ENCODE measurements at regions of chr3 and their contacts with region 1.

Region 1: GRCh38 chr3:13484851-13485590 is 4.9 kb downstream of the HDAC11 start:
- DNase-seq: peak; percentile 92 to 98 (median 94)
- ATAC-seq: peak; percentile 90
- H3K4me3 ChIP-seq: no peak overlapping the region
- H3K27ac ChIP-seq: peak overlapping the region; percentile 60
- H3K4me1 ChIP-seq: peaks cover 21 to 49% of the 10 kb centered on the region in 2 experiments
- H3K27me3 ChIP-seq: no peaks in the 10 kb centered on the region
- CTCF ChIP-seq: no peak
- EP300 ChIP-seq: peak; percentile 94
- POLR2A ChIP-seq: 0 out of 2 replicates have a peak, but pooled peaks have one; percentile 30
- RAD21 ChIP-seq: no peak

Region 2: GRCh38 chr3:13429631-13430291 is 55.3 kb before region 1 on chr3:
- CTCF ChIA-PET with region 1: no interaction called
- POLR2A ChIA-PET with region 1: no interaction called
- in situ Hi-C with region 1: no loop called
- intact Hi-C with region 1: loop called (anchors 2 kb)
- DNase-seq: peak in 2 of 4 experiments; percentile 15 to 67
- ATAC-seq: peak; percentile 60
- H3K4me3 ChIP-seq: no peak overlapping the region
- H3K27ac ChIP-seq: peak overlapping the region; percentile 45; the same call in 2 of the 3 replicates
- H3K4me1 ChIP-seq: peaks cover 10 to 15% of the 10 kb centered on the region in 2 experiments; a peak in 3 of 5 replicates
- H3K27me3 ChIP-seq: no peaks in the 10 kb centered on the region; a peak in 1 of 5 replicates
- CTCF ChIP-seq: no peak
- EP300 ChIP-seq: peak; percentile 28; the same call in 1 of the 2 replicates
- POLR2A ChIP-seq: no peak
- RAD21 ChIP-seq: no peak